Activated CD4-positive, alpha-beta memory T cell treated with anti-CD3 and anti-CD28 coated beads for 36 hours (primary cell): ENCODE measurements at regions of chr2 and their contacts with region 1.

Region 1: GRCh38 chr2:24382363-24383073 is 22.2 kb upstream of the ITSN2 start:
- DNase-seq: peak; percentile 64
- H3K4me3 Mint-ChIP-seq: no peak overlapping the region
- H3K27ac Mint-ChIP-seq: no peak overlapping the region
- H3K4me1 Mint-ChIP-seq: no peaks in the 10 kb centered on the region
- H3K27me3 Mint-ChIP-seq: no peaks in the 10 kb centered on the region

Region 2: GRCh38 chr2:24228470-24228869 is 154.0 kb before region 1 on chr2:
- CTCF ChIA-PET with region 1: no interaction called
- POLR2A ChIA-PET with region 1: no interaction called
- intact Hi-C with region 1: loop called (anchors 1 kb)
- DNase-seq: no peak
- H3K4me3 Mint-ChIP-seq: no peak overlapping the region
- H3K27ac Mint-ChIP-seq: no peak overlapping the region
- H3K4me1 Mint-ChIP-seq: no peaks in the 10 kb centered on the region
- H3K27me3 Mint-ChIP-seq: no peaks in the 10 kb centered on the region

Region 3: DNA sequence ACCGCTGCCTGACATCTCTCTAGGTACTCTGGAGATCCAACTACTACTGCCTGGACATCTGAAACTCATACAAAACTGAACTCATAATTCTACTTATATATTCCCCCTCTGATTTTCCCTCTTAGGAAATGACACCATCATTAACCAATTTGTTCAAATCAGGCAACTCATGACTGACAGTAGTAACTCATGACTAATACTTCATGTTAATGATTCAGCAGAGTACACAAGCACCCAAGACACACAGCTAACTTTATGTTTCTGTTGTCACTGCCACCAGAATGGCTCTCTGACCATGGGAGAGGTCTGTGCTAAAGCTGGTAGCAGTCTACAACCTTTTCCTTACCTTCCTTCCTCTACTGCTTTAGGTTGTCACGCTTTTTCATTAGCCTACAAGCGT is 113.3 kb before region 1 on chr2:
- CTCF ChIA-PET with region 1: no interaction called
- POLR2A ChIA-PET with region 1: no interaction called
- intact Hi-C with region 1: loop called (anchors 10 kb)
- DNase-seq: no peak
- H3K4me3 Mint-ChIP-seq: no peak overlapping the region
- H3K27ac Mint-ChIP-seq: peak overlapping the region; percentile 10
- H3K4me1 Mint-ChIP-seq: peaks cover 6% of the 10 kb centered on the region
- H3K27me3 Mint-ChIP-seq: no peaks in the 10 kb centered on the region

Region 4: GRCh38 chr2:24343225-24343882 is 39.2 kb before region 1 on chr2:
- CTCF ChIA-PET with region 1: no interaction called
- POLR2A ChIA-PET with region 1: no interaction called
- intact Hi-C with region 1: no loop called
- DNase-seq: no peak
- H3K4me3 Mint-ChIP-seq: no peak overlapping the region
- H3K27ac Mint-ChIP-seq: no peak overlapping the region
- H3K4me1 Mint-ChIP-seq: peaks cover 56% of the 10 kb centered on the region
- H3K27me3 Mint-ChIP-seq: no peaks in the 10 kb centered on the region

Region 5: DNA sequence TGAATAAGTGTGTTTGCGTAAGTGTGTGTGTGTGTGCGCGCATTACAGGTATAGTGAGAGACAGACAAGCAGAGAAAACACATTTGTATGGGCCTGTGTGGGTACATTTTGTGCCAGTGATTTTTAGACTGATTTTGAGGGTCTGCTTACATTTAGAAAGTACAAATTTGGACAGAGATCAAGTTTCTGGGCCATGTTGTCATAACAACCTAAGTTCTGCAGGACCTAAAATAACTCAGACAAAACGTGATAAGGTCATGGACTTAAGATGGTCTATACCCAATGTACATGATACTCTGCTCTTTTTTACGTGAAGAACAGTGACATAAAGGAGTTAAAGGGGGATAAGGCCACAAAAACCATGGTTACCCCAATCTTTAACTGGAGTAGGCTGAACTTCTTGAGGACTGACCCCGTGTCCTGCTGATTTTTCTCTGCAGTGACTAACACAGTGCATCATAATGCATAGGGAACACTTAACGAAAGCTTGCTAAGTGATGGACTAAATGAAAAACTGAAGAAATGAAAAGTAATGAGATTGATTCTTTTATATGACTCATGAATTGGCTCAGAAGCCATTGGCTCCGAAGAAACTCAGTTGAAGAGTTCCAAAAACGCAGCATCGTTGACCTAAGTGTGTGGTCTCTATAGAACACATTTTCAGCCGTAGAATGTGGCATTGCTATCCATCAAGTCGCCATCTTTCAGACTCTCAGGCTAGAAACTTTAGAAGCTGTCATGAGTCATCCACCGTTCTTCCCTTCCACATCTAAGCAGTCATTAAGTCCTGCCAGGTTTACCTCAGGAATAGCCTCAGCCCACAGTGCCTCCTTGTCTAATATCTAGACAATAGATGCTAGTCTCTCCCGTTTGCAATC is 46.9 kb after region 1 on chr2:
- CTCF ChIA-PET with region 1: no interaction called
- POLR2A ChIA-PET with region 1: no interaction called
- intact Hi-C with region 1: no loop called
- DNase-seq: no peak
- H3K4me3 Mint-ChIP-seq: no peak overlapping the region
- H3K27ac Mint-ChIP-seq: no peak overlapping the region
- H3K4me1 Mint-ChIP-seq: no peaks in the 10 kb centered on the region
- H3K27me3 Mint-ChIP-seq: no peaks in the 10 kb centered on the region

Region 6: DNA sequence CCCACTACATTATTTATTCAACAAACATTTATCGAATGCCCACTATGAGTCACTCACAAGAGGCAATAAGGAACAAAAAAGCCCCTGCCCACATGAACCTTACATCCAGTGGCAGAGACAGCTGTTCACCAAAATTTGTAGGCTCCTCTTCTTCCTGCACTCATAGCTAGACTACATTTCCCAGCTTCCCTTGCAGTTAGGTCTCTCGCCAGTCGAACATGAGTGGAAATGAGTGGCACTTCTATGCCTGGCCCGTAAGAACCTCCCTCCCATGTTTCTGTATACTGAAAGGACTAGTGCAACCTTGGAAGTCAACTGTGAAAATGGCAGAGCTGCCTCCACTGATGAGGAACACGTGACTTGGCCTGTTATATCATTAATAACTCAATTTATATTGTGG is 89.1 kb after region 1 on chr2:
- CTCF ChIA-PET with region 1: no interaction called
- POLR2A ChIA-PET with region 1: no interaction called
- intact Hi-C with region 1: no loop called
- DNase-seq: no peak
- H3K4me3 Mint-ChIP-seq: no peak overlapping the region
- H3K27ac Mint-ChIP-seq: no peak overlapping the region
- H3K4me1 Mint-ChIP-seq: no peaks in the 10 kb centered on the region
- H3K27me3 Mint-ChIP-seq: peaks cover 4% of the 10 kb centered on the region